ENCODE measurements at regions of chr14 and their contacts with region 1.

Region 1: GRCh38 chr14:61561657-61562276 is 133.5 kb upstream of the HIF1A start:
- DNase-seq: peak; percentile 99
- ATAC-seq: peak; percentile 39
- H3K4me3 ChIP-seq: peak overlapping the region; percentile 19; the same call in 1 of the 2 replicates
- H3K27ac ChIP-seq: peak overlapping the region; percentile 96
- H3K4me1 ChIP-seq: peaks cover 90% of the 10 kb centered on the region
- H3K27me3 ChIP-seq: no peaks in the 10 kb centered on the region
- CTCF ChIP-seq: peak; percentile 25; the same call in 1 of the 2 replicates

Region 2: GRCh38 chr14:61368114-61368726 is 193.5 kb before region 1 on chr14:
- CTCF ChIA-PET with region 1: no interaction called
- POLR2A ChIA-PET with region 1: no interaction called
- intact Hi-C with region 1: no loop called
- DNase-seq: peak; percentile 93
- ATAC-seq: peak; percentile 93
- H3K4me3 ChIP-seq: peak overlapping the region; percentile 8; the same call in 1 of the 2 replicates
- H3K27ac ChIP-seq: peak overlapping the region; percentile 35
- H3K4me1 ChIP-seq: peaks cover 23% of the 10 kb centered on the region
- H3K27me3 ChIP-seq: no peaks in the 10 kb centered on the region
- CTCF ChIP-seq: no peak

Region 3: DNA sequence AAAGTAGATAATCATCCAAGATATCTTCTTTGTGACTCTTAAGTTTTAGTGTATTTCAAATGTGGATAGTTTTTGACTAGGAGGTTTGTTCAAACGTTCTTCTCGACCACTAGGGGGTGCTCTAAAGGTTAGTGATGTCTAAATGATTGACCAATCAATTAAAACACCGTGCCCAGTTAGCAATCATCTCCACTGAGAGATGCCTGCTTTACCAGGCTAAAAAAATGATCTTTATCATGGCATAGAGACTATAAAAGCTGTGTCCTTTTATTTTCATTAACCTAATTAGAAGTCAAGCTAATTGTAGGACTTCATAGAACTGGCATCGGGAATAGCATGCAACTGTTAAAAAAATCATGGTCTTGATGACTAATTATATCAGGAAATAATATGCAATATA is 86.5 kb before region 1 on chr14:
- CTCF ChIA-PET with region 1: interaction called, 8 read pairs
- POLR2A ChIA-PET with region 1: interaction called, 4 read pairs
- intact Hi-C with region 1: loop called (anchors 1 kb)
- DNase-seq: peak; percentile 89
- ATAC-seq: no peak
- H3K4me3 ChIP-seq: no peak overlapping the region
- H3K27ac ChIP-seq: peak overlapping the region; percentile 40
- H3K4me1 ChIP-seq: peaks cover 84% of the 10 kb centered on the region
- H3K27me3 ChIP-seq: no peaks in the 10 kb centered on the region
- CTCF ChIP-seq: peak; percentile 97

Region 4: DNA sequence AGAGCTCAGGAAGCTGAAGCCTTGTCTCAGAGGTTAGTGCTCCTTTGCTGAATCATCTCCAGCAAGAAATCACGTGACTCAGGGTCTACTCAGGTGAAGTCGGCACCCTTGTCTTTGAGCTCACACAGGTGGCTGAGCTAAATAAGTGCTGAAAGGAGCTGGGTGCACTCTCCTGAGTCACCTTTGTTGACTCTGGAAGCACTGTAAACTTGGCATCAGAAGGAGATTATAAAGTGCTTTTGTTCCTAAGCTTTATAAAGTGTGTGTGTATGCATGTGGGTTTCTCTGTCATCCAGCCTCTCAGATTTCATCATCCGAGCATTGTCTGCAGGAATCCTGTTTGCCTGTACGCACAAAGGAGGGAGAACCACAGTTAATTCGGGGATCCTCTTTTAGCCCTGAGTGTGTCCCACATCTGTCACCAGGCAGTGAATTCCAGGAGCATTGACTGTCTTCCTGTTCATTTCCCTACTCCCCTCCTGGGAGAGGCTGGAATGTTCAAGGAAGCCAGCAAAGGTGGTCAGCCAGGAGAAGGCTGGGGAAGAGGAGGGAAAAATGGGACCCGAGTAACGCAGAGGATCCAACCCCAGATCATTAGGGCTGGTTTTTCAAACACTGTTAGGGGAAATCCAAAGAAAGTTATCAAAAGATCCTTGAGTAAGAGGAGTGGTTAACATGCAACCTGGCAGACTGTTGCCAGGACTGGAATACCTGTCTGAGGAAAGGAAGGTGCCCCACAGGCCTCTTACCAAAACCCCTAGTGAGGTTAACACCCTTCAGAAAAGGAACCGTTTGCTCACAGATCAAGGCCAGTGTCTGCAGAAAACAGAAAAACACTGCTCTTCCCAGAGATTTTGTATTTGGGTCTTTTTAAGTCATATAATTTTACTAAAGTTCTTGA is 24.0 kb before region 1 on chr14:
- CTCF ChIA-PET with region 1: interaction called, 3 read pairs
- POLR2A ChIA-PET with region 1: interaction called, 12 read pairs
- intact Hi-C with region 1: loop called (anchors 1 kb)
- DNase-seq: peak; percentile 100
- ATAC-seq: peak; percentile 94
- H3K4me3 ChIP-seq: peak overlapping the region; percentile 8; the same call in 1 of the 2 replicates
- H3K27ac ChIP-seq: peak overlapping the region; percentile 90
- H3K4me1 ChIP-seq: peaks cover 58% of the 10 kb centered on the region
- H3K27me3 ChIP-seq: no peaks in the 10 kb centered on the region
- CTCF ChIP-seq: no peak

Region 5: DNA sequence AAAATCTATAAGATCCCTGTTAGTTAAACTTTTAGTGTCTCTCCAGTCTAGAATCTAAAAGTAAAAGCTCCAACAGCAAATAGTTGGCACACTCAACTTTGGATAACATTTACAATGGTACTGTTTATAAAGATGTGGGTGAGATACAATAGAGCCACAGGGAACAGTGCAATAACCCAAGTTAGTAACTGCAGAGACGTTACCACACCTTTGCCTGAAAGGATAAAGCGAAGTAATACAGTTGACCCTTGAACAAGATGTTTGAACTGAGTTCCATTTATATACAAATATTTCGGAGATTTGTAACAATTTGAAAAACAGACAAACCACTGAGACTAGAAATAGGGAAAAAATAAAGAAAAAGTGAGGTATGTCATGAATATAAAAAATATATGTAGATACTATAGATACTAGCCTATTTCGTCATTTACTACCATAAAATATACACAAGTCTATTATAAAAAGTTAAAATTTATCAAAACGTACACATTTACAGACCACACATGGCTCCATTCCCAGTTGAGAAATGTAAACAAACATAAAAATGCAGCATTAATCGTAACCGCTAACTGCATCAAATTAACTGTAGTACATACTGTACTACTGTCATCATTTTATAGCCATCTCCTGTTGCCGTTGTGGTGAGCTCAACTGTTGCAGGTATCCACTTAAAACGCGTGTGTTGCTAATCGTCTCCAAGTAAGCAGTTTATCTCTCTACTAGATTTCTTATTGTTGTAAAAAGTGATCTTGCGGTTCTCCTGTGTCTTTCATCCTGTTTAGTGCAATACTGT is 77.0 kb after region 1 on chr14:
- CTCF ChIA-PET with region 1: interaction called, 3 read pairs
- POLR2A ChIA-PET with region 1: interaction called, 4 read pairs
- intact Hi-C with region 1: loop called (anchors 1 kb)
- DNase-seq: peak; percentile 92
- ATAC-seq: peak; percentile 90
- H3K4me3 ChIP-seq: 0 out of 2 replicates have a peak overlapping the region, but pooled peaks have one; percentile 3
- H3K27ac ChIP-seq: peak overlapping the region; percentile 75
- H3K4me1 ChIP-seq: peaks cover 36% of the 10 kb centered on the region
- H3K27me3 ChIP-seq: no peaks in the 10 kb centered on the region
- CTCF ChIP-seq: no peak

Region 6: GRCh38 chr14:61694830-61695694 is 133.3 kb after region 1 on chr14 and contains the start of gene HIF1A:
- CTCF ChIA-PET with region 1: no interaction called
- POLR2A ChIA-PET with region 1: interaction called, 10 read pairs
- intact Hi-C with region 1: loop called (anchors 1 kb)
- DNase-seq: peak; percentile 100
- ATAC-seq: peak; percentile 90
- H3K4me3 ChIP-seq: peak within 1 kb of the TSS; percentile 86
- H3K27ac ChIP-seq: peak within 1 kb of the TSS; percentile 81
- H3K4me1 ChIP-seq: peaks cover 34% of the 10 kb centered on the region
- H3K27me3 ChIP-seq: no peaks in the 10 kb centered on the region
- CTCF ChIP-seq: peak; percentile 49
- total RNA-seq, gene HIF1A: 266 and 319 TPM in 2 replicates

Region 7: DNA sequence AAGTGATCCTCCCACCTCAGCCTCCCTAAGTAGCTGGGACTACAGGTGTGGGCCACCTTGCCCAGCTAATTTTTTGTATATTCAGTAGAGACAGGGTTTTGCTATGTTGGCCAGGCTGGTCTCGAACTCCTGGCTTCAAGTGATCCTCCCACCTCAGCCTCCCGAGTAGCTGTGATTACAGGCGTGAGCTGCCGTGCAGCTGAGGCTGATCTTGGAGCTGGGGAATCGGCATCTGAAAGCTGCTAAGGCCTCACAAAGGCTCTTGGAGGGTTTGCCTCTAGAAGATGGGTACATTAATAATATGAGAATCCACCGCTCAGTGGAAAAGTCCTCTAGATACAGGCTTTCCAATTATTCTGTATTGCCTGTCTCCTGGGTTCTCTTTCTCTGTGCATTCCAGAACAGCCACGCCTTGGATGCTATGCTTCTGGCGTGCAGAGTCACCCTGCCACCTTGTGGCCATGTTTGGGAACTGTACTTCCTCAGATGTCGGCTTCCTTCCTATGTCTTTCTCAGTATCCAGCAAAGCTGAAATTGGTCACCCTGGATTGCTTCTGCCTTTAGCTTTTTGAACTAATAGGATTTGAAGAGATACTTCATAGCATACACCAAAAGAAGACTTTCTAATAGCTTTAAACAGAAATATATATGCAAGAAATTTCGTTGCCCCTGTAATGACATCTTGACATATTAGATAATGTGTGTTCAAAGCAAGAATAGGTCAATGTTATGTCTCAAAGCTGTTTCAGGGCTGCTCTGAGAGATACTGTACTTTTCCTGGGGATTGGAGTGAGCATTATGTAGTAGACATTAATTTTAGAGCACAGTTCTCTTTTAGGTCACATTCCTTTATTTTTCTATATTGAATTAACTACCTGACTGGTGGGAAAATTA is 275.8 kb after region 1 on chr14:
- CTCF ChIA-PET with region 1: no interaction called
- POLR2A ChIA-PET with region 1: interaction called, 3 read pairs
- intact Hi-C with region 1: loop called (anchors 2 kb)
- DNase-seq: peak; percentile 97
- ATAC-seq: peak; percentile 85
- H3K4me3 ChIP-seq: no peak overlapping the region
- H3K27ac ChIP-seq: peak overlapping the region; percentile 73
- H3K4me1 ChIP-seq: peaks cover 29% of the 10 kb centered on the region
- H3K27me3 ChIP-seq: no peaks in the 10 kb centered on the region
- CTCF ChIP-seq: peak; percentile 98